ENCODE measurements at regions of chr15 and their contacts with region 1.

Region 1: GRCh38 chr15:63466378-63467192 is 37.8 kb upstream of the USP3 start:
- DNase-seq: peak in 12 of 14 experiments; percentile 20 to 89 (median 42)
- ATAC-seq: peak; percentile 81
- H3K4me3 ChIP-seq: no peak overlapping the region
- H3K4me3 Mint-ChIP-seq: no peak overlapping the region
- H3K27ac ChIP-seq: no peak overlapping the region
- H3K27ac Mint-ChIP-seq: peak overlapping the region; percentile 19
- H3K4me1 ChIP-seq: peaks cover 15% of the 10 kb centered on the region
- H3K4me1 Mint-ChIP-seq: peaks cover 39% of the 10 kb centered on the region
- H3K27me3 ChIP-seq: no peaks in the 10 kb centered on the region
- H3K27me3 Mint-ChIP-seq: no peaks in the 10 kb centered on the region
- CTCF ChIP-seq: peak; percentile 79

Region 2: GRCh38 chr15:62896978-62897647 is 569.5 kb before region 1 on chr15:
- CTCF ChIA-PET with region 1: no interaction called
- POLR2A ChIA-PET with region 1: no interaction called
- intact Hi-C with region 1: no loop called
- DNase-seq: no peak
- ATAC-seq: no peak
- H3K4me3 ChIP-seq: no peak overlapping the region
- H3K4me3 Mint-ChIP-seq: no peak overlapping the region
- H3K27ac ChIP-seq: no peak overlapping the region
- H3K27ac Mint-ChIP-seq: no peak overlapping the region
- H3K4me1 ChIP-seq: no peaks in the 10 kb centered on the region
- H3K4me1 Mint-ChIP-seq: no peaks in the 10 kb centered on the region
- H3K27me3 ChIP-seq: peaks cover 0 to 3% of the 10 kb centered on the region in 2 experiments
- H3K27me3 Mint-ChIP-seq: peaks cover 17% of the 10 kb centered on the region
- CTCF ChIP-seq: no peak

Region 3: GRCh38 chr15:63487076-63487757 is 20.6 kb after region 1 on chr15:
- CTCF ChIA-PET with region 1: interaction called, 26 read pairs
- POLR2A ChIA-PET with region 1: interaction called, 14 read pairs
- intact Hi-C with region 1: loop called in 1 of 2 experiments (anchors 2 kb)
- DNase-seq: peak; percentile 79 to 93 (median 88)
- ATAC-seq: peak; percentile 90
- H3K4me3 ChIP-seq: no peak overlapping the region
- H3K4me3 Mint-ChIP-seq: peak overlapping the region; percentile 2
- H3K27ac ChIP-seq: peak overlapping the region in 1 of 2 donors; percentile 33
- H3K27ac Mint-ChIP-seq: peak overlapping the region; percentile 29
- H3K4me1 ChIP-seq: peaks cover 67% of the 10 kb centered on the region
- H3K4me1 Mint-ChIP-seq: peaks cover 67% of the 10 kb centered on the region
- H3K27me3 ChIP-seq: no peaks in the 10 kb centered on the region
- H3K27me3 Mint-ChIP-seq: no peaks in the 10 kb centered on the region
- CTCF ChIP-seq: peak; percentile 96

Region 4: GRCh38 chr15:63514531-63514943 is 48.0 kb after region 1 on chr15:
- CTCF ChIA-PET with region 1: interaction called, 24 read pairs
- POLR2A ChIA-PET with region 1: interaction called, 11 read pairs
- intact Hi-C with region 1: no loop called
- DNase-seq: peak in 1 of 14 experiments; percentile 52
- ATAC-seq: peak; percentile 19
- H3K4me3 ChIP-seq: no peak overlapping the region
- H3K4me3 Mint-ChIP-seq: peak overlapping the region; percentile 44
- H3K27ac ChIP-seq: peak overlapping the region in 1 of 2 donors; percentile 10
- H3K27ac Mint-ChIP-seq: peak overlapping the region; percentile 48
- H3K4me1 ChIP-seq: peaks cover 40% of the 10 kb centered on the region
- H3K4me1 Mint-ChIP-seq: peaks cover 99% of the 10 kb centered on the region
- H3K27me3 ChIP-seq: no peaks in the 10 kb centered on the region
- H3K27me3 Mint-ChIP-seq: no peaks in the 10 kb centered on the region
- CTCF ChIP-seq: no peak

Region 5: DNA sequence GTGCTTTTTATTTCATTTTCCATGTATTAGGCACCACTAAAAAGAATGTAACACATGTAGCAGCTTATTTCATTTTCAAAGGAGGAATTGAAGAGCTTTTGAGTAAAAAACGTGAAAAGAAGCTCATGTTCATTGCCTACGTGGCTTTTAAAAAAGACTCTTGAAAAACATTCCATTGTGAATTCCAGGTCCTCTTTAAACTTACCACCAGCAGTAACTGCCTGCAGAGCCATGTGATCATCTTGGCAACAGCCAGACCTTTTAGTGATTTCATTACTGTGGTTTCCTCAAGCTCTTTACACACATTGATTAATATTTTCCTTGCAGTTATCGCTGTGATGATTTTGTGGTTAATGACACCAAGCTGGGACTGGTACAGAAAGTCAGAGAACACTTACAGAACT is 86.8 kb after region 1 on chr15:
- CTCF ChIA-PET with region 1: interaction called, 22 read pairs
- POLR2A ChIA-PET with region 1: interaction called, 7 read pairs
- intact Hi-C with region 1: loop called in 1 of 2 experiments (anchors 5 kb)
- DNase-seq: peak in 1 of 14 experiments; percentile 27
- ATAC-seq: peak; percentile 51
- H3K4me3 ChIP-seq: no peak overlapping the region
- H3K4me3 Mint-ChIP-seq: no peak overlapping the region
- H3K27ac ChIP-seq: no peak overlapping the region
- H3K27ac Mint-ChIP-seq: peak overlapping the region; percentile 67
- H3K4me1 ChIP-seq: no peaks in the 10 kb centered on the region
- H3K4me1 Mint-ChIP-seq: peaks cover 68% of the 10 kb centered on the region
- H3K27me3 ChIP-seq: no peaks in the 10 kb centered on the region
- H3K27me3 Mint-ChIP-seq: no peaks in the 10 kb centered on the region
- CTCF ChIP-seq: no peak

Region 6: GRCh38 chr15:63600616-63601025 is 134.0 kb after region 1 on chr15:
- CTCF ChIA-PET with region 1: interaction called, 24 read pairs
- POLR2A ChIA-PET with region 1: interaction called, 9 read pairs
- intact Hi-C with region 1: loop called (anchors 2 to 5 kb)
- DNase-seq: peak; percentile 78 to 98 (median 88)
- ATAC-seq: peak; percentile 77
- H3K4me3 ChIP-seq: peak overlapping the region; percentile 79
- H3K4me3 Mint-ChIP-seq: peak overlapping the region; percentile 95
- H3K27ac ChIP-seq: peak overlapping the region; percentile 63 to 75
- H3K27ac Mint-ChIP-seq: peak overlapping the region; percentile 90
- H3K4me1 ChIP-seq: peaks cover 55% of the 10 kb centered on the region
- H3K4me1 Mint-ChIP-seq: peaks cover 73% of the 10 kb centered on the region
- H3K27me3 ChIP-seq: no peaks in the 10 kb centered on the region
- H3K27me3 Mint-ChIP-seq: no peaks in the 10 kb centered on the region
- CTCF ChIP-seq: no peak